Dorsolateral prefrontal cortex (tissue), 120 donors: ENCODE measurements at regions of chr18 and their contacts with region 1.

Region 1: GRCh38 chr18:14919666-14920065 is 171.7 kb downstream of the ANKRD30B start:
- DNase-seq: no peak
- H3K4me3 ChIP-seq: no peak overlapping the region
- H3K27ac ChIP-seq: no peak overlapping the region
- H3K27me3 ChIP-seq: peaks cover 0 to 7% (median 0%) of the 10 kb centered on the region in 45 donors
- CTCF ChIP-seq: no peak

Region 2: GRCh38 chr18:14933964-14934363 is 14.3 kb after region 1 on chr18:
- intact Hi-C with region 1: loop called in 1 of 2 experiments (anchors 2 kb)
- DNase-seq: no peak
- H3K4me3 ChIP-seq: no peak overlapping the region
- H3K27ac ChIP-seq: no peak overlapping the region
- H3K27me3 ChIP-seq: peaks cover 0 to 9% (median 0%) of the 10 kb centered on the region in 45 donors
- CTCF ChIP-seq: no peak

Region 3: DNA sequence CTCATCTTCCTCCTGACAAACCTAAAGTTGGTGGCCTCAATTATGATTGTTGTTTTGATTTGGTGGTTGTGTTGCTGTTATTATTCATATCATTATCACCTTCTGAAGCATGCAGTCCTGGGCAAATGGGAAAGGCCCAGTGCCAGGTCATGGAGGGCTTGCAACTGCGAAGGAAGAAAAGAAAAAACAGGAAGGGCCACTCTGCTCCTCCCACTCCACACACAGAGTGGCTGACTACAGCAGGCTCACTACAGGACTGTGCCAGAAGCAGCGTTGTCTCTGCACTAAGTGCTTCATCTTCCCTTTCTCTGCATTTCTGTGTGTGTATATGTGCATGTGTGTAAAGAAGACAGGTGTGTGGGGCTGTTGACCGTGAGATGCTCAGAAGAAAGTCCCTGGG is 60.2 kb after region 1 on chr18:
- intact Hi-C with region 1: no loop called
- DNase-seq: no peak
- H3K4me3 ChIP-seq: no peak overlapping the region
- H3K27ac ChIP-seq: no peak overlapping the region
- H3K27me3 ChIP-seq: peaks cover 0 to 15% (median 0%) of the 10 kb centered on the region in 45 donors
- CTCF ChIP-seq: no peak